Dorsolateral prefrontal cortex (tissue), 120 donors: ENCODE measurements at regions of chr10 and their contacts with region 1.

Region 1: GRCh38 chr10:77889277-77889903 is 37.2 kb downstream of the DLG5 start:
- DNase-seq: peak in 9 of 10 donors; percentile 43 to 79 (median 70)
- H3K4me3 ChIP-seq: peak overlapping the region in 1 of 59 donors; percentile 31
- H3K27ac ChIP-seq: peak overlapping the region in 46 of 59 donors; percentile 1 to 88 (median 67)
- H3K27me3 ChIP-seq: no peaks in the 10 kb centered on the region
- CTCF ChIP-seq: peak in 11 of 56 donors; percentile 15 to 46 (median 23)

Region 2: DNA sequence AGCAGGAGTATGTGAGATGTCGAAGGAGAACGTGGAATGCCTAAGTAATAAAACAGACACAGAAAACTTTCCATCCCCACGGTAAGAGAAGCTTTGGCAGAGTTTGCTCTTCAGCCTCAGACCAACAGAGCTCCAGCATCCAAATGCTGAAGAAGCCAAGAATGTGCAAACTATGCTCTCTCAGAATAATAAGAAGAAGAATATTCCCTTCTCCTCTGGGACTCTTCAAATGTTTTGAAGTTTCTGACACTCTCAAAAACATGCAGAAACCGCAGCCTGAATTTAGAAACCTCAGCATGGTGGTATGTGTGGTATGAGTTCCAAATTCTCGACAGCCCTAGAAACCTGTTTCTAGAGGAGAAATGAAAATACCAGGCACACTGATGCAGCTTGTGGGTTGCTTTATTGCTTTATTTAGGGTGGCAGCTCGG is 365.1 kb before region 1 on chr10:
- intact Hi-C with region 1: no loop called
- DNase-seq: no peak
- H3K4me3 ChIP-seq: no peak overlapping the region
- H3K27ac ChIP-seq: peak overlapping the region in 16 of 59 donors; percentile 4 to 57 (median 18)
- H3K27me3 ChIP-seq: peaks cover 0 to 2% (median 0%) of the 10 kb centered on the region in 45 donors
- CTCF ChIP-seq: no peak

Region 3: DNA sequence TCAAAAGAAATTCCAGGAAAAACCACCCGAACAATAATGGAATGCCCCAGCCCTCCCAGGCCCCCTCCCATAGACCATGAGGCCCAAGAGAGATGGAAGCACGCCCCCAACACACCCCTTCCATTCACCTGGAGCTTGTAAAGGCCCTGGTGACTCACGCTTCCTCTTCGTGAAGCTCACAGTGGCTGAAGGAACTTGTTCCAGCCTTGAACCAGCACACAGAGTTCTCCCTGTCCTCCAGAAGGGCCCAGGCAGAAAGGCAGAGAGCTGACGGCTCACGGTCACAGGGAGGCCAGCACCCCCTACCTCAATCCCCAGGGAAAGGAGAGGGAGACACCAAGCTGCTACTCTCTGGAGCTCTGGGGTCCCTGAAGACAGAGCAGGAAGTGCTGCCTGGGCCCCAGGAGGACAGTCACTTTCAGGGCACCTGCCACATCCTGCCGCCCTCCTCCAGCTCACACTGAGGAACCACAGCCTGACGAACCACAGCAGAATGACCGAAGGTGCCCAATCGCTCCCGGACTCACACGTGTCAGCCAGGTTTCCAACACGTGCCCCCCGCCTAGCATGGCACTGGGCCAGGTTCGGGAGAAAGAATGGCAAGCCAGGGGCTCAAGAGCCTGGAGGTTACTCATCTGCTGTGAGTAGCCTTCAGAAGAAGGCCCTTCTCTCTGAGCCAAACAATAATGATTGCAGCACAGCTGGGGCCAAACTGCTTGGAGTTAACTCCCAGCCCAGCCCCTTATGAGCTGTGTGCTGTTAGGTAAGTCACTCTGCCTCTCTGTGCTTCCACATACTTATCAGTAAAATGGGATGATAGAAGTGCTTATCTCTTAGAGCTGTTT is 15.6 kb before region 1 on chr10:
- intact Hi-C with region 1: loop called in 1 of 2 experiments (anchors 2 kb)
- DNase-seq: peak in 2 of 10 donors; percentile 30 to 35
- H3K4me3 ChIP-seq: no peak overlapping the region
- H3K27ac ChIP-seq: peak overlapping the region in 57 of 59 donors; percentile 49 to 94 (median 87)
- H3K27me3 ChIP-seq: no peaks in the 10 kb centered on the region
- CTCF ChIP-seq: no peak